Colonic mucosa (tissue), 4 donors: ENCODE measurements at regions of chr5 and their contacts with region 1.

Region 1: DNA sequence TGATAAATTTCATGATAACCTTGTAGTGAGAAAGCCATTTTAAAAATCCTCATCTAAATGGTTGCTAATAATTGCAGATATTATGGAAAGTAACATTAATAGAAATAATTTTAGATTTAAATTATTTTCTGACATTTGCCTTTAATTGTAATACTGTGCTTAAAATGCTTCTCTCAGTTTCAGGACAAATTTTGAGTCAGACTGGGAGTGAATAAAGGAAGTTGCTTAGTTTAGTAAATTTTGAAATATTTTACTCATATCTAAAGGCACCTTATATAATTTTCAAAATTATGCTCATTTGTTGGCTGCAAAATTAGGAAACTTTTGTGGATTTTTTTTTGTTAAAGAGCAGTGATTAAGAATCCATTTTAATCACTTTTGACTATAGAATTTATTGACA is 93.8 kb downstream of the CSNK1G3 start:
- DNase-seq: no peak
- H3K4me3 ChIP-seq: no peak overlapping the region
- H3K27ac ChIP-seq: no peak overlapping the region
- H3K4me1 ChIP-seq: no peaks in the 10 kb centered on the region
- H3K27me3 ChIP-seq: no peaks in the 10 kb centered on the region
- CTCF ChIP-seq: no peak

Region 2: GRCh38 chr5:123398058-123398733 is 207.6 kb before region 1 on chr5:
- intact Hi-C with region 1: loop called (anchors 10 kb)
- DNase-seq: no peak
- H3K4me3 ChIP-seq: no peak overlapping the region
- H3K27ac ChIP-seq: no peak overlapping the region
- H3K4me1 ChIP-seq: no peaks in the 10 kb centered on the region
- H3K27me3 ChIP-seq: no peaks in the 10 kb centered on the region
- CTCF ChIP-seq: no peak

Region 3: GRCh38 chr5:123423278-123424149 is 182.3 kb before region 1 on chr5 and contains the start of gene CEP120:
- intact Hi-C with region 1: loop called (anchors 10 kb)
- DNase-seq: peak; percentile 99
- H3K4me3 ChIP-seq: peak within 1 kb of the TSS; percentile 73
- H3K27ac ChIP-seq: peak within 1 kb of the TSS; percentile 90
- H3K4me1 ChIP-seq: no peaks in the 10 kb centered on the region
- H3K27me3 ChIP-seq: no peaks in the 10 kb centered on the region
- CTCF ChIP-seq: peak; percentile 70
- total RNA-seq, gene CEP120: 11.7 to 18.2 TPM

Region 4: DNA sequence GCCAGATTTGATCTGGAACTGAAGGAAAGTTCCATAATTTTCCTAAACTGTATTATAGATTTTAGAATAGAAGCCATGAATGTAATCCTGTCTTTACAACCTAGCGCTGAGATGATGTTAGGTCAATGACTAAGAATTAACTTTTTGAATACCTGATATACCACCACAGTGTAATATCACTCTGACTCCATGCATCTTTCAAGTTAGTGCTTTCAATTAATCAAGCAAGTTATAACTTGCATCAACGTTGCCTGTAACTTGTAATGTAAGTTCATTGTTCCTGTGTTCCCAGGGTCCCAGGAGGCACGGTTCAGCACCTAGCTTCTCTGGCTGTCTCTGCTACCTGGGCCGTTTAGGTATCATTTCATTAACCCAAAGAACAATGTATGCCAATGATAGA is 45.4 kb after region 1 on chr5:
- intact Hi-C with region 1: no loop called
- DNase-seq: no peak
- H3K4me3 ChIP-seq: no peak overlapping the region
- H3K27ac ChIP-seq: no peak overlapping the region
- H3K4me1 ChIP-seq: no peaks in the 10 kb centered on the region
- H3K27me3 ChIP-seq: no peaks in the 10 kb centered on the region
- CTCF ChIP-seq: no peak